ENCODE measurements at regions of chr5 and their contacts with region 1.

Region 1: DNA sequence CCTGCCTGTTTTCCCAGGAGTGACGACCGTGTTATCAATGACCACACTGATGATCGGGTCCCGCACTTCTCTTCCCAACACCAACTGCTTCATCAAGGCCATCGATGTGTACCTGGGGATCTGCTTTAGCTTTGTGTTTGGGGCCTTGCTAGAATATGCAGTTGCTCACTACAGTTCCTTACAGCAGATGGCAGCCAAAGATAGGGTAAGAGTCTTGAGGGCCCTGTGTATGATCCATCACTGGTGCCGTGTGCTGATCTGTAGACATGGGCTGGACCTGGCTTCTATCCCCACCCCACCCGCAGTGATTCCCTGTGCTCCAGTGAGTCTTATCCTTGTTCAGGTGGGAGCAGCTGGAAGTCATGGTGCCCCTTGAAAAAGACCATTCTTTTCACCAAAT is 26.0 kb downstream of the GABRP start:
- DNase-seq: peak; percentile 35 to 58 (median 44)
- ATAC-seq: peak; percentile 67
- H3K4me3 ChIP-seq: no peak overlapping the region
- H3K27ac ChIP-seq: no peak overlapping the region
- H3K4me1 ChIP-seq: no peaks in the 10 kb centered on the region
- H3K27me3 ChIP-seq: no peaks in the 10 kb centered on the region
- CTCF ChIP-seq: peak in 6 of 7 experiments; percentile 27 to 75 (median 68)
- POLR2A ChIP-seq: no peak

Region 2: DNA sequence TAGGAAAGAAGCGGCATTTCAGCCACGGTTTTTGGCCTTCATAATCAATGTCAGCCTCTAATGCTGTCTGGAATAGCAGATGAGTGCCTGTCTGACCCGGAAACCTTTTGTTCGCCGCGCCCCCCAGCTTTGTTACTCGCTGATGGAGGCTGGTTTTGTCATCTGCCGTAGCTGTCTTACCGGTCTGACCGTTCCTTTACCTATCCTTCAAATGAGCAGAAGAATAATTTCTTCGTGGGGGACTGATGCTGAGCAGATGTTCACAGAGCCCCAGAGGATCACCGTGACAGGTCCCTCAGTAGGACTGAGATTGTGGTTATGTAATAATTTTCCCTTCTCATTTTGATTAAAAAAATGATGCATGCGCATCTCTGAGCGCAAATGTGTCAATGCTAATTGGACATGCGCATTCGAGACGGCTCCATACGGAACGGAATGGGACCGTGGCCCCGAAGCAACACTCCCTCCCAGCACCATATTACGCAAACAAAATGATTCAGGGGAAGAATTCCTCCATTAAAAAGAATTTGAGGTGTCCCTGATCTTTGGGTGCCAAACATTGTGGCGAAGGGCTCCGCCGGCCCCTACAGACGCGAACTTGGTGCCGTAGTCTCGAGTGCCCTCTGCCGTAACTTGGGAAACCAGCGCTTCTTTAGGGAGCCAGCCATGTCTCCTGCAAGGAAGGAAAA is 527.1 kb after region 1 on chr5:
- intact Hi-C with region 1: loop called (anchors 10 kb)
- DNase-seq: peak; percentile 40 to 55 (median 46)
- ATAC-seq: peak; percentile 52
- H3K4me3 ChIP-seq: no peak overlapping the region
- H3K27ac ChIP-seq: no peak overlapping the region
- H3K4me1 ChIP-seq: peaks cover 16% of the 10 kb centered on the region
- H3K27me3 ChIP-seq: no peaks in the 10 kb centered on the region
- CTCF ChIP-seq: peak in 6 of 7 experiments; percentile 35 to 65 (median 56)
- POLR2A ChIP-seq: no peak